Panc1 (cell line): ENCODE measurements at regions of chr13 and their contacts with region 1.

Region 1: DNA sequence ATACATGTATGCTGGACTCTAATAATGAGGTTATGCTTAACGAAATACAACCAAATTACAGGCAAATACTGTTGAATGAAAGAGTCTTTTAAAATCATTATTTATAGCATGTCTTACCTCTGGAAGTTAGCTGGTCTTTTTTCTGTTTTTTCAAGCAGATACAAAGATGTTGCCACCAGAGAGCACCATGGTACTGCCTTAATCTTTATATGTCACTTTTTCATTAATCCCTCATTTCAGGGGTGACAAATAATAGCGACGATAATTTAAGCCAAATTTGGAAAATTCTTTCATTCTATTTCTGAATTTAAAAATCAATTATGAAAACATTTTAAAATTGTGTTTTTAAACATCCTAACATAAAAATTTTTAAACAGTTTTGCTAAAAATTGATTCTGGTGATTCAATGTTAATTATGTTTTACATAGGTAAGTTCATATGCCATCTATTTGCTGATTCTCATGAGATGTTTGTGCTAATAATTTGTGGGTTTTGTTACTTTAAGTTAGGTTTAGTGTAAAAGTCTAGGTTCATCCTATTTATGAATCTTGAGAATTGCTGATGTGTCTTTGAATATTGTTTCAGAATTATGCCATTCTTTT is 379.3 kb upstream of the SGCG start:
- DNase-seq: no peak
- ATAC-seq: no peak
- H3K4me3 ChIP-seq: no peak overlapping the region
- H3K27ac ChIP-seq: no peak overlapping the region
- H3K4me1 ChIP-seq: no peaks in the 10 kb centered on the region
- H3K27me3 ChIP-seq: peaks cover 4% of the 10 kb centered on the region; the same call in 1 of the 2 replicates
- CTCF ChIP-seq: peak; percentile 23; the same call in 1 of the 2 replicates

Region 2: GRCh38 chr13:21638319-21639282 is 1162.9 kb before region 1 on chr13:
- CTCF ChIA-PET with region 1: interaction called, 8 read pairs
- POLR2A ChIA-PET with region 1: no interaction called
- in situ Hi-C with region 1: no loop called
- intact Hi-C with region 1: loop called (anchors 5 kb)
- DNase-seq: no peak
- ATAC-seq: no peak
- H3K4me3 ChIP-seq: no peak overlapping the region
- H3K27ac ChIP-seq: no peak overlapping the region
- H3K4me1 ChIP-seq: no peaks in the 10 kb centered on the region
- H3K27me3 ChIP-seq: no peaks in the 10 kb centered on the region; the same call in 1 of the 2 replicates
- CTCF ChIP-seq: peak; percentile 71

Region 3: GRCh38 chr13:23020223-23020843 is 218.8 kb after region 1 on chr13:
- CTCF ChIA-PET with region 1: interaction called, 3 read pairs
- POLR2A ChIA-PET with region 1: interaction called, 3 read pairs
- in situ Hi-C with region 1: no loop called
- intact Hi-C with region 1: loop called (anchors 1 kb)
- DNase-seq: peak; percentile 62
- ATAC-seq: peak; percentile 80
- H3K4me3 ChIP-seq: no peak overlapping the region
- H3K27ac ChIP-seq: no peak overlapping the region
- H3K4me1 ChIP-seq: no peaks in the 10 kb centered on the region
- H3K27me3 ChIP-seq: no peaks in the 10 kb centered on the region
- CTCF ChIP-seq: peak; percentile 79

Region 4: GRCh38 chr13:23175920-23176319 is 374.4 kb after region 1 on chr13:
- CTCF ChIA-PET with region 1: no interaction called
- POLR2A ChIA-PET with region 1: no interaction called
- in situ Hi-C with region 1: no loop called
- intact Hi-C with region 1: loop called (anchors 5 kb)
- DNase-seq: no peak
- ATAC-seq: no peak
- H3K4me3 ChIP-seq: no peak overlapping the region
- H3K27ac ChIP-seq: no peak overlapping the region
- H3K4me1 ChIP-seq: no peaks in the 10 kb centered on the region
- H3K27me3 ChIP-seq: no peaks in the 10 kb centered on the region
- CTCF ChIP-seq: no peak

Region 5: GRCh38 chr13:23319883-23320224 is 518.4 kb after region 1 on chr13:
- CTCF ChIA-PET with region 1: interaction called, 6 read pairs
- POLR2A ChIA-PET with region 1: no interaction called
- in situ Hi-C with region 1: no loop called
- intact Hi-C with region 1: loop called (anchors 5 kb)
- DNase-seq: no peak
- ATAC-seq: no peak
- H3K4me3 ChIP-seq: no peak overlapping the region
- H3K27ac ChIP-seq: no peak overlapping the region
- H3K4me1 ChIP-seq: peaks cover 4% of the 10 kb centered on the region; the same call in 1 of the 2 replicates
- H3K27me3 ChIP-seq: no peaks in the 10 kb centered on the region
- CTCF ChIP-seq: peak; percentile 34; the same call in 1 of the 2 replicates